Activated T-helper 2 cell treated with anti-CD3 and anti-CD28 coated beads, Interferon-gamma antibody, Interleukin-2, Interleukin-4, amounts not matched to agents 10 μg/mL and 5 μg/mL and 100 μg/mL, durations not matched to agents 14 hours and 24 hours and 36 hours (primary cell): ENCODE measurements at regions of chr1 and their contacts with region 1.

Region 1: GRCh38 chr1:180178511-180179161 is 24.0 kb downstream of the QSOX1 start:
- DNase-seq: peak; percentile 28
- H3K4me3 Mint-ChIP-seq: no peak overlapping the region
- H3K27ac Mint-ChIP-seq: no peak overlapping the region
- H3K4me1 Mint-ChIP-seq: no peaks in the 10 kb centered on the region
- H3K27me3 Mint-ChIP-seq: no peaks in the 10 kb centered on the region

Region 2: DNA sequence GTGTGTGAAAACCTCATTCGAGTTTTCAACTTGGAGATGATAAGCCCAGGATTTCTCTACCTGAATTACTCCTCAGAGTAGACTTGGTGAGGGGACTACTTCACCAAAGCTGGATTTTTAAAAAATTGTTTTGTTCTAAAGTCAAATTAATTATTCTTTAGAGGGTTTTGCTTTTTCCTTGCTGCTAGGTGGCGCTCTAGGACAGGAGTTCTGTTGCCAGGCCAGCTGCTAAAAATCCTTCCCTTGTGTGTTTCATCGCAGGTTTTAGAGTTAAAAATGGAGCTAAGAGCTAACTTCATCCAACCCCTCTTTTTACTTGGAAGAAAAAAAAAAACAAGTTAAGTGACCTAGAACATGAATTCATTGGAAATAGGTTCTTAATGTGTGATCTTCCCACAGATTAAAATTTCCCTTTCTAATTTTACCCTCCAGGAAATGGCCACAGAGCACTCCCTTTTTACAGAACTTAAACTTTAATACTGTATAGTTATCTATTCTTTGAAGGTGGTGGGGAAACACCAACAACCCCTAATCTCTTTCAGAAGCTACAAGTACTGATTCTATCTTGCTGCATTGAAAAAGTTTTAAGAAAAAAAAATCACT is 472.2 kb before region 1 on chr1:
- intact Hi-C with region 1: loop called (anchors 10 kb)
- DNase-seq: peak; percentile 40
- H3K4me3 Mint-ChIP-seq: no peak overlapping the region
- H3K27ac Mint-ChIP-seq: no peak overlapping the region
- H3K4me1 Mint-ChIP-seq: peaks cover 5% of the 10 kb centered on the region
- H3K27me3 Mint-ChIP-seq: peaks cover 2% of the 10 kb centered on the region

Region 3: DNA sequence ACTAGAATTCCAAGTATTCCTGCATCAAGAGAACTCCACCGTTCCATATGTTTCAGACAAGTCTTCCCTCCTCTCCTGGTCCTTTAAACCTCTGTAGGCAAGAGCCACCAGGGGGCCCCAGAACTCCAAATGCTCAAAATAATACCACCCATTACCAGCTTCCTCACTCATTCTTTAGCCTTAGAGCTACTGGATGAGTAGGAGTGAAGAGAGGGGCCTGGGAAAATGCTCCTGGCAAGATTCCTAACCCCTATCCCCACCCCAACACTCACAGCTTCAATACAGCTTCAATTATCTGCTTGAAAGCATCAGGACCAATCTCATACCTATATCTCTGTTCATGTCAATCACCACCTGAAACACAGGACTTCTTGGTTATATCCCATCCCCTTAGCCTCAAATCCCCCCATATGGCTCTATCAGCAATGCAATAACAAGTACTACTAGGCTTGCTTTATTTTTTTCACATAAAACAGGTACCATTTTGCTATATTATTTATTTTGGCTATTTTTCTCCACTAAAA is 310.8 kb before region 1 on chr1:
- intact Hi-C with region 1: loop called (anchors 1 kb)
- DNase-seq: no peak
- H3K4me3 Mint-ChIP-seq: no peak overlapping the region
- H3K27ac Mint-ChIP-seq: no peak overlapping the region
- H3K4me1 Mint-ChIP-seq: peaks cover 6% of the 10 kb centered on the region
- H3K27me3 Mint-ChIP-seq: no peaks in the 10 kb centered on the region